ENCODE measurements at regions of chr7 and their contacts with region 1.

Region 1: GRCh38 chr7:54796150-54796549 is 37.1 kb upstream of the SEC61G start:
- DNase-seq: no peak
- H3K4me3 ChIP-seq: no peak overlapping the region
- H3K27ac ChIP-seq: no peak overlapping the region
- H3K4me1 ChIP-seq: peaks cover 1% of the 10 kb centered on the region
- H3K27me3 ChIP-seq: no peaks in the 10 kb centered on the region
- CTCF ChIP-seq: no peak
- EP300 ChIP-seq: no peak
- POLR2A ChIP-seq: no peak

Region 2: DNA sequence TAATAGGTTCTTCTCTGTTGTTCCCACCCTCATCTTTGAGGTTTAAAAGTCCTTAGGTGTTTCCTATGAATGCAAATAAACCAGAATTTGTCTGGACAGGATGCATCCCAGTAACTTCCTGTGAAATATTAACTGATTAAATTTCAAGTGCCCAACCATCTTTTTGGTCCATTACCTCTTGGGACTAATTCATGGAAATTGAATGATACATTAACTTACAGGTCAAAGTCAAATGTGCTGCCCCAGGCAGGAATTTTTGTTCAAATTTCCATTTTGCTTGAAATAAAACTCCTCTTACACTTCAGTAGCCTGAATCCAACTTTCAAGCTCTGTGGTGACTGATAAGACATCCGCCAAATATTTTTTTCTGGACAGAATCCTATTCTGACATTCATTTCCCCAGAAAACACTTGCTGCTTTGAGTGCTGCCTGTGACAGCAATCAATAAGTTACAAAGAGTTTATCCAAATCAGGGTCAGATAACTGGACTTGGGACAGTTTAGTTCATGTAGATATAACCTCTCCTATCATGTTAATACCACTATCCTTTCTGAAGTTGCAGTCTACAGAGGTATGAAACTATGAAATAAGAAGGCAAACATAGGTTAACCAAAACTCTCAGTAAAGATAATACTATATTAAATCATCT is 1377.2 kb before region 1 on chr7:
- intact Hi-C with region 1: no loop called
- DNase-seq: no peak
- H3K4me3 ChIP-seq: no peak overlapping the region
- H3K27ac ChIP-seq: no peak overlapping the region
- H3K4me1 ChIP-seq: no peaks in the 10 kb centered on the region
- H3K27me3 ChIP-seq: no peaks in the 10 kb centered on the region
- CTCF ChIP-seq: no peak
- EP300 ChIP-seq: no peak
- POLR2A ChIP-seq: no peak

Region 3: DNA sequence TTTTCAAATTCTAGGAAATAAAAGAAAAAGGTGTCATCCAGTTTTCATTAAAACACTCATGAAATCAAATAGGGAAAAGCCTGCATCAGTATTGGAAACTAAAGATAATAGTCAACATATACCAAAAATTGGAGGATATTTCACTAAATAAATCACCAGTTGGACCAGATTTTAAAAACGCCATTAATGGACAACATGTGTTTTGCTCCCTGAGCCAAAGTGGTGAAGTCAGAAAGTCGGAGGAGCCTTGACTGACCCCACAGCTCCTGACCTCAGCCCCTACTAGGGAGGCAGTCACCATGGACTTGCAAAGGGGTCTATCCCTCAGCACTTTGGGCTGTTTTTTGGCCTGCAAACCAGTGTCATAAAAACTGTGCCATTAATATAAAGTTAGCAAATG is 61.1 kb after region 1 on chr7:
- intact Hi-C with region 1: no loop called
- DNase-seq: no peak
- H3K4me3 ChIP-seq: no peak overlapping the region
- H3K27ac ChIP-seq: no peak overlapping the region
- H3K4me1 ChIP-seq: peaks cover 2% of the 10 kb centered on the region
- H3K27me3 ChIP-seq: no peaks in the 10 kb centered on the region
- CTCF ChIP-seq: no peak
- EP300 ChIP-seq: no peak
- POLR2A ChIP-seq: no peak

Region 4: GRCh38 chr7:54904130-54904529 is 108.0 kb after region 1 on chr7:
- intact Hi-C with region 1: no loop called
- DNase-seq: no peak
- H3K4me3 ChIP-seq: no peak overlapping the region
- H3K27ac ChIP-seq: no peak overlapping the region
- H3K4me1 ChIP-seq: no peaks in the 10 kb centered on the region
- H3K27me3 ChIP-seq: no peaks in the 10 kb centered on the region
- CTCF ChIP-seq: no peak
- EP300 ChIP-seq: peak; percentile 51
- POLR2A ChIP-seq: no peak

Region 5: GRCh38 chr7:55185941-55186609 is 389.9 kb after region 1 on chr7:
- intact Hi-C with region 1: loop called in 1 of 4 experiments (anchors 5 kb)
- DNase-seq: no peak
- H3K4me3 ChIP-seq: no peak overlapping the region
- H3K27ac ChIP-seq: no peak overlapping the region
- H3K4me1 ChIP-seq: peaks cover 23% of the 10 kb centered on the region
- H3K27me3 ChIP-seq: no peaks in the 10 kb centered on the region
- CTCF ChIP-seq: no peak
- EP300 ChIP-seq: no peak
- POLR2A ChIP-seq: no peak

Region 6: DNA sequence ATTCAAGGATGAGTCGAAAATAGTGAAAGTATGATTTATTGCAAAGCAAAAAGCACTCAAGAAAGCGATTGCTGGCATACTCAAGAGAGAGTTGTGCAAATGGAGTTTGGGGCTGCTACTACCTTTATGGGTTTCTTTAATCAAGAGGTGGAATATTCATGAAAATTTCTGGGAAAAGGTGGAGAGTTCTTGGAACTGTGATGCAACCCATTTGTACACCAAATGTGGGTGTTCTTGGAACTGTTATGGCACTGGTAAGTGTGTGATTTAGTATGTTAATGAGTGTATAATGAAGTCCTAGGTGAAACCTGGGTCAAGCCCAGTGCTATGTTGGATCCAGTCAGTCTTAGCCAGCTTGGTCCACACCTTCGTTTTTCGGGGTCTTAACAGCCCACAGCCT is 779.6 kb after region 1 on chr7:
- intact Hi-C with region 1: no loop called
- DNase-seq: no peak
- H3K4me3 ChIP-seq: no peak overlapping the region
- H3K27ac ChIP-seq: no peak overlapping the region
- H3K4me1 ChIP-seq: peaks cover 2% of the 10 kb centered on the region
- H3K27me3 ChIP-seq: no peaks in the 10 kb centered on the region
- CTCF ChIP-seq: no peak
- EP300 ChIP-seq: no peak
- POLR2A ChIP-seq: no peak

Measured in ovary (tissue), 10 donors.